GM12878 (cell line): ENCODE measurements at regions of chr1 and their contacts with region 1.

Region 1: GRCh38 chr1:66339944-66340343 is 194.0 kb upstream of the SGIP1 start:
- DNase-seq: no peak
- ATAC-seq: peak; percentile 8
- H3K4me3 ChIP-seq: peak overlapping the region; percentile 42
- H3K27ac ChIP-seq: peak overlapping the region; percentile 83
- H3K4me1 ChIP-seq: peaks cover 21% of the 10 kb centered on the region
- H3K27me3 ChIP-seq: no peaks in the 10 kb centered on the region
- CTCF ChIP-seq: no peak
- EP300 ChIP-seq: no peak
- POLR2A ChIP-seq: no peak
- RAD21 ChIP-seq: no peak

Region 2: DNA sequence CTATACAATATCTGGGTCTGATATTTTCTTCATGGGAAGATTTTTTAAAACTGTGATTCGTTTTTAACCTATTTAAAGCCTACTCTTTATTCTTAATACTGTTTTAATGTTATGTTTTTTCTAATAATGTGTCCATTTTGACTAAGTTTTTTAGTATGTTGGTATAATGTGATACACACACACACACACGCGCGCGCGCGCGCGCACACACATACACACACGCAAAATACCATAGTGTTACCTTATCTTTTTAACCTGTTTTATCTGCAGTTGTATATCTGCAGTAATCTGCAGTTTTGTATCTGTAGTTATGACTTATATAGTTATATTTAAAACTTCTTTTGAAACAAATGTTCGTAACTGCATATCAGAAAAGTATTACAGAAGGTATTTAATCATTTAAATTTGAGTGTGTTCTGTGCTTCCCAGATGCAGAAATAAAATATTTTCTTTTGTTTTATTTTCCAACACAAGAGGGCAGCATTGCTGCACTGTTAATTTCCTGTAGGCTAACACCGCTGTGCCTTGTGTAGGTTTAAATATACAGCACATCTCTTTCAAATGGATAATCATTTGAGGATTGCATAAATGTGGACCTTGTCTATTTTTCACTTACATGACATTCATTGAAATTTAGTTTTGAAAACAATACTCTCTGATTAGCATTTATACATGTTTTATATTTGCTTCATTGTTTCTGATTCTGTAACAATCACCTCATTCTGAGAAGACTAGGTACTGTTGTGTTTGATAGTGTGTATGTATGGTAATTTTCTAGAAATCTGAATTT is 381.2 kb before region 1 on chr1:
- CTCF ChIA-PET with region 1: interaction called, 3 read pairs
- POLR2A ChIA-PET with region 1: no interaction called
- RAD21 ChIA-PET with region 1: no interaction called
- SMC1A ChIA-PET with region 1: no interaction called
- in situ Hi-C with region 1: no loop called
- intact Hi-C with region 1: loop called (anchors 10 kb)
- DNase-seq: peak; percentile 7
- ATAC-seq: peak; percentile 78
- H3K4me3 ChIP-seq: no peak overlapping the region
- H3K27ac ChIP-seq: no peak overlapping the region
- H3K4me1 ChIP-seq: no peaks in the 10 kb centered on the region
- H3K27me3 ChIP-seq: peaks cover 0 to 2% of the 10 kb centered on the region in 2 experiments; a peak in 1 of 4 replicates
- CTCF ChIP-seq: peak; percentile 42 to 73 (median 46); a peak in 5 of 6 replicates
- EP300 ChIP-seq: no peak
- POLR2A ChIP-seq: no peak
- RAD21 ChIP-seq: peak; percentile 95

Region 3: DNA sequence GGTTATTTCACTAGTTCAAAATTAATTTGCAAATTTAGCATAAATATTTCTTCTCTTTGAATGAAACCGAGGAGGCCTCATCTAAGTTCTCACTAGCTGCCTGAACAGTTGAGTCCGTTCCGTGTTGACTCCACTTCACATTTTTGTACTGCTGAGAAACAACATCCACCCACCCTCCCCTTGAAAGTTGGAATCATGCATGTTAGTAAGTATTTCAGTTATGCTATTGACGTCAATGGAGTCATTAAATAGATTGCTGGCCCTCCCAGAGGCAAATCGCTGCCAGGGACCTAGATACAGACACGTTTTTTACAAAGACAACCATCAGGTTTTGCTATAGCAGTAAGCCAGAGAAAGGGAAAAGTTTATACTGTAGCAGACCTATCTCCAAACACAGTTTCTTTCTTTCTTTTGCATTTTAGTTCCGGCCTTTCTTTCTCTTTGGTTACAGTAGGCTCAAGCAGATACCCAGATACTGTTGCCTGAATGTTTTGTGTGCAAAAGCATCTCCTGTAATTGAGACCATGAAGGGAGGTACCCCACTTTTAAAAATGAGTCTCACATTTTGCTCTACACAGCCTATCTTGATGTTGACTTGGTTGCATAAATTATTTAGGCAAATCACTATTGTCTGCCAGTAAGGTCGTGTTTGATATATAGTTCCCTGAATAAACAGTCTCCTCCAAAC is 68.6 kb before region 1 on chr1:
- CTCF ChIA-PET with region 1: interaction called, 7 read pairs
- POLR2A ChIA-PET with region 1: interaction called, 8 read pairs
- RAD21 ChIA-PET with region 1: interaction called, 14 read pairs
- SMC1A ChIA-PET with region 1: interaction called, 290 read pairs
- in situ Hi-C with region 1: no loop called
- intact Hi-C with region 1: no loop called
- DNase-seq: no peak
- ATAC-seq: peak; percentile 58
- H3K4me3 ChIP-seq: no peak overlapping the region
- H3K27ac ChIP-seq: no peak overlapping the region
- H3K4me1 ChIP-seq: peaks cover 21% of the 10 kb centered on the region
- H3K27me3 ChIP-seq: no peaks in the 10 kb centered on the region
- CTCF ChIP-seq: no peak
- EP300 ChIP-seq: peak; percentile 38 to 77; a peak in 1 of 4 replicates
- POLR2A ChIP-seq: no peak
- RAD21 ChIP-seq: no peak

Region 4: DNA sequence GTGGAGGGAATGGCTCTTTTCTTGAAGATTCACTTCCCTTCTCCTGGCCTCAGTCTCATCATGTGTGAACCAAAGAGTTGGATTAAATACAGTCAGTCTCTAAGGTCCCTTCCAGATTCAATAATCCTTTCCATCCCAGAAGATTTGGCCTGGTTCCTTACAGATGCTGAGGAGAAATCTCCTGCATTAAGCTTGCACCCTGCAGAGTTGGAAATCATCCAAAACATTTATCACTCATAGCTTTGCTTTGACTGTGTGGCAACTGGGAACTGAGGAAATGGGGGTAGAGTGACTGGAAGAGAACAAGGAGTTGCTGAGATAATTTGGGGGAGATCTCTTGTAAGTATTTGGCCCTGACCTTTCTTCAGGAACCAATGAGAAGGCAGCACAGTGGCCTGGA is 26.5 kb before region 1 on chr1:
- CTCF ChIA-PET with region 1: no interaction called
- POLR2A ChIA-PET with region 1: no interaction called
- RAD21 ChIA-PET with region 1: no interaction called
- SMC1A ChIA-PET with region 1: no interaction called
- in situ Hi-C with region 1: no loop called
- intact Hi-C with region 1: no loop called
- DNase-seq: no peak
- ATAC-seq: no peak
- H3K4me3 ChIP-seq: no peak overlapping the region
- H3K27ac ChIP-seq: no peak overlapping the region
- H3K4me1 ChIP-seq: no peaks in the 10 kb centered on the region
- H3K27me3 ChIP-seq: no peaks in the 10 kb centered on the region
- CTCF ChIP-seq: no peak
- EP300 ChIP-seq: no peak
- POLR2A ChIP-seq: no peak
- RAD21 ChIP-seq: no peak

Region 5: GRCh38 chr1:66380452-66381212 is 40.7 kb after region 1 on chr1:
- CTCF ChIA-PET with region 1: interaction called, 29 read pairs
- POLR2A ChIA-PET with region 1: interaction called, 4 read pairs
- RAD21 ChIA-PET with region 1: interaction called, 113 read pairs
- SMC1A ChIA-PET with region 1: interaction called, 463 read pairs
- in situ Hi-C with region 1: no loop called
- intact Hi-C with region 1: loop called (anchors 2 kb)
- DNase-seq: peak; percentile 87
- ATAC-seq: peak; percentile 95
- H3K4me3 ChIP-seq: peak overlapping the region; percentile 55
- H3K27ac ChIP-seq: peak overlapping the region; percentile 83
- H3K4me1 ChIP-seq: peaks cover 39% of the 10 kb centered on the region
- H3K27me3 ChIP-seq: no peaks in the 10 kb centered on the region
- CTCF ChIP-seq: no peak
- EP300 ChIP-seq: peak; percentile 99
- POLR2A ChIP-seq: no peak
- RAD21 ChIP-seq: no peak

Region 6: GRCh38 chr1:66402194-66402593 is 62.2 kb after region 1 on chr1:
- CTCF ChIA-PET with region 1: interaction called, 5 read pairs
- POLR2A ChIA-PET with region 1: interaction called, 6 read pairs
- RAD21 ChIA-PET with region 1: interaction called, 10 read pairs
- SMC1A ChIA-PET with region 1: interaction called, 12 read pairs
- in situ Hi-C with region 1: no loop called
- intact Hi-C with region 1: loop called (anchors 2 kb)
- DNase-seq: peak; percentile 87
- ATAC-seq: peak; percentile 76
- H3K4me3 ChIP-seq: no peak overlapping the region
- H3K27ac ChIP-seq: peak overlapping the region; percentile 77
- H3K4me1 ChIP-seq: peaks cover 58% of the 10 kb centered on the region
- H3K27me3 ChIP-seq: no peaks in the 10 kb centered on the region
- CTCF ChIP-seq: no peak
- EP300 ChIP-seq: peak; percentile 88 to 95; a peak in 3 of 4 replicates
- POLR2A ChIP-seq: 0 out of 2 replicates have a peak, but pooled peaks have one; percentile 42
- RAD21 ChIP-seq: no peak